Activated T-helper 1 cell treated with anti-CD3 and anti-CD28 coated beads, Interleukin-12 subunit alpha, Interleukin-12 subunit beta, Interleukin-2, Interleukin-4 antibody, amounts not matched to agents 30 ng/mL and 10 ng/mL and 1 ng/mL, durations not matched to agents 14 hours and 24 hours and 36 hours (primary cell): ENCODE measurements at regions of chr12 and their contacts with region 1.

Region 1: GRCh38 chr12:120580787-120581723 is at the start of gene POP5:
- DNase-seq: peak; percentile 95
- H3K4me3 Mint-ChIP-seq: peak within 1 kb of the TSS; percentile 98
- H3K27ac Mint-ChIP-seq: peak within 1 kb of the TSS; percentile 89
- H3K4me1 Mint-ChIP-seq: peaks cover 36% of the 10 kb centered on the region
- H3K27me3 Mint-ChIP-seq: peaks cover 18% of the 10 kb centered on the region
- total RNA-seq, gene POP5: 83.3 and 85.0 TPM in 2 replicates

Region 2: DNA sequence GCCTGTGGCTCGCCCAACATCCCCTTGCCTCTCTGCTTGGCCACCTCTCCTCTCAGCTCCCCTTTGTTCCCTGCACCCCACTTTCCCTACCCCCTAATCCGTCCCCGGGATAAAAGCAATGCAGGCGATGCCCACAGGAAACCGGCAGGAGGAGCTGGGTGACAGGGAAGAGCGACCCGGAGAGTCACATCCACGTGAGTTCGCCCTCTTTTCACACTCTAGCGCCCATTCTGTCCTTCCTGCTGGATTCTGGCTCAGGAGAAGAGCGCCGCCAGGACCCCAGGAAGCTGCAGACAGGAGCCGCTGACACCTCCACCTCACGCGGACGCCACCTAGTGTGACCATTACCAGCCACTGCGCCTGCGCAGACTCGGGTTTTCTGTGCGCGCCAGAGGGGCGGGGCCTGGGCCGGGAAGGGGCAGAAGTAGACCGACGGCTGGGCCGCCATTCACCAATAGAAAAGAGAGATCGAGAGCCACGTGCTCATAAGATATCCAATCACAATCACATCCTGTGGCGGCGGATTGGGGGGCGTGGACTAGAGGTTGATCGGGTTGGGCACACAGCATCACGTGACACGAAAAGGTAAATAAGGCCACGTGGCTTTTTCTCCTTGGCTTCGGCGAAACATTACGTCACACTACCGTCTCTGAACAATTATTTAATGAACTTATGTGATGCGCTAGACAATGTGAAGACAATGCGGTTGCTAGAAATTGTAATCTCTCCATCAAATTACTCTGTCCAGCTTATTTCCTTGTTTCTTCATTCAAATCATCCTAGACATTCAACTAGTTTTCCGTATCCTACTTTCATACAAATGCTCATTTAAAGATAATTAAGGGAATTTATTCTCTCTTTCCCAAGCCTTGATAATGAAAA is 263.6 kb before region 1 on chr12:
- intact Hi-C with region 1: loop called (anchors 2 kb)
- DNase-seq: peak; percentile 100
- H3K4me3 Mint-ChIP-seq: peak overlapping the region; percentile 89
- H3K27ac Mint-ChIP-seq: peak overlapping the region; percentile 92
- H3K4me1 Mint-ChIP-seq: peaks cover 16% of the 10 kb centered on the region
- H3K27me3 Mint-ChIP-seq: peaks cover 6% of the 10 kb centered on the region

Region 3: DNA sequence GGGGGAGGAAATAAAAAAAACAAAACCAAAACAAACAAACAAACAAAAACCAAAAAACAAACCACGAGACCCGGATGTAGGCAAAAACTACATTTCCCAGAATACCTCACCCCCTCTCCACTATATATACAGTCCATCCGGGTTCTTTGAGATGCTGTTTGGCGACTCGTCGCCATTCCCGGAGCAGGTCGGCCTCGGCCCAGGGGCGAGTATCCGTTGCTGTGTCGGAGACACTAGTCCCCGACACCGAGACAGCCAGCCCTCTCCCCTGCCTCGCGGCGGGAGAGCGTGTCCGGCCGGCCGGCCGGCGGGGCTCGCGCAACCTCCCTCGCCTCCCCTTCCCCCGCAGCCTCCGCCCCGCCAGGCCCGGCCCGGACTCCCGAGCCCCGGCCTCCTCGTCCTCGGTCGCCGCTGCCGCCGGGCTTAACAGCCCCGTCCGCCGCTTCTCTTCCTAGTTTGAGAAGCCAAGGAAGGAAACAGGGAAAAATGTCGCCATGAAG is 46.8 kb before region 1 on chr12 and contains the start of gene RNF10:
- intact Hi-C with region 1: loop called (anchors 1 kb)
- DNase-seq: peak; percentile 79
- H3K4me3 Mint-ChIP-seq: peak within 1 kb of the TSS; percentile 96
- H3K27ac Mint-ChIP-seq: peak within 1 kb of the TSS; percentile 94
- H3K4me1 Mint-ChIP-seq: peaks cover 53% of the 10 kb centered on the region
- H3K27me3 Mint-ChIP-seq: no peaks in the 10 kb centered on the region
- total RNA-seq, gene RNF10: 170 and 181 TPM in 2 replicates

Region 4: DNA sequence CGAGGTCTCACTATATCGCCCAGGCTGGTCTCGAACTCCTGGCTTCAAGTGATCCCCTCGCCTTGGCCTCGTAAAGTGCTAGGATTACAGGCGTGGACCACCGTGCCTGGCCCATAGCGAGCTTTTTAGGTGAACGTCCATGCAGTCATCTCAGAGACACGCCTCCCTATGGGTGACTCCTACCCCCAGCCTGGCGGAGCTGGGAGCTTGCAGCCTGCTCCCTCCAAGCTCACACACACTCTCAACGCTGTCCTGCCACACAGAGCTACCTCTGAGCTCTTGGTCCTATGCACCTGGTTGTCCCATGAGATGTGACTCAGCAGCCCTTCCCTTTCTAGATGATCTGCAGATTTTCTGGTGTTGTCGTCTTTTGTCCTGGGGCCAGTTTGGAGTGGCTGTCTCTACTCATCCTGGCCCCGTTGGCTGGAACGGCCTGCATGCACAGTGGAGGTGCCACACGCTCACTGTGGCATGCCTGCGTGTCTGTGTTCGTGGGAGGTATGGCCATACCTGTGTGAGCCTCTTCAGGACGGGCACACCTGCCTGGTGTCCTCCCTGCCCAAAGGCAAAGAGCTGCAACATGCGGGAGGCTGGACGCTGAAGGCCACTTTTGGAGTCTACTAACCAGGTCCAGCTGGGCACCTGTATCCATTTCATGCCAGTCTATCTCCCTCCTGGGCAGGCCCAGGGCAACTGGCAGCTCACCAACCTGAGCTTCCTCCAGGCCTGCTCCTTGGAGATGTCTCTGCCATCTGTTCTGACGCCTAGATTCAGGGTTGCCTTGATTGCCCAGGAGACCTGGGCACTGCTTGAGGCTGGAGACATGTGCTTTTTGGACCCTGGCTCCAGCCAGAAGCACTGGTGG is 77.5 kb after region 1 on chr12:
- intact Hi-C with region 1: no loop called
- DNase-seq: no peak
- H3K4me3 Mint-ChIP-seq: no peak overlapping the region
- H3K27ac Mint-ChIP-seq: no peak overlapping the region
- H3K4me1 Mint-ChIP-seq: no peaks in the 10 kb centered on the region
- H3K27me3 Mint-ChIP-seq: peaks cover 6% of the 10 kb centered on the region

Region 5: DNA sequence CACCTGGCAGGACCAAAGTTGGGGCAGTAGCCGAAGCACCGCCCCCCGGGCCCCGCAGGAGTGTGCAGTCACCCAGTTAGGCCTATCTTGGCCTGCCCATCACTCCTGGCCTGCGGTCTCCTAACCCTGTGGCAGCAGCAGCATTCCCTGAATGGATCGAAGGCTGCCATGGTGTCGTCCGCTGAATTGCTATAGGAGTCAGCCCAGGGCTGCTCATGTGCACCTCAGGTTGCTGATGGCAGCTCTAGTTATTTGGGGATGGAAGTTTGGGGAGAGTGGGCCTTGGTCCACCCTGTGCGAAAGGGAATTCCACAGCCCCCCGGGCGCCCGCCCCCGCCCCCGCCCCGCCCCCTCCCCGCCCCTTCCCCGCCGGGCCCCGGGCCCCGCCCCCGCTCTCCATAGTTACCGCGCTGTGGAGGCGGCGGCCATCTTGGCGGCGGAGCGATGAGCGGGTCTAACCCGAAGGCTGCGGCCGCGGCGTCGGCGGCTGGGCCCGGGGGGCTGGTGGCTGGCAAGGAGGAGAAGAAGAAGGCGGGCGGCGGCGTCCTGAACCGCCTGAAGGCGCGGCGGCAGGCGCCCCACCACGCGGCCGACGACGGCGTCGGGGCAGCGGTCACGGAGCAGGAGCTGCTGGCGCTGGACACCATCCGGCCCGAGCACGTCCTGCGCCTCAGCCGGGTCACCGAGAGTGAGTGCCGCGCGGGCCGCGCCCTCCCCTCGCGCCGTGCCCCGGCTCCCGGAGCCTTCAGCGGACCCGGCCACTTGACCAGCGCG is 129.2 kb after region 1 on chr12 and contains the start of gene UNC119B:
- intact Hi-C with region 1: loop called (anchors 1 kb)
- DNase-seq: peak; percentile 71
- H3K4me3 Mint-ChIP-seq: peak within 1 kb of the TSS; percentile 91
- H3K27ac Mint-ChIP-seq: peak within 1 kb of the TSS; percentile 89
- H3K4me1 Mint-ChIP-seq: peaks cover 37% of the 10 kb centered on the region
- H3K27me3 Mint-ChIP-seq: no peaks in the 10 kb centered on the region
- total RNA-seq, gene UNC119B: 24.2 and 24.6 TPM in 2 replicates

Region 6: DNA sequence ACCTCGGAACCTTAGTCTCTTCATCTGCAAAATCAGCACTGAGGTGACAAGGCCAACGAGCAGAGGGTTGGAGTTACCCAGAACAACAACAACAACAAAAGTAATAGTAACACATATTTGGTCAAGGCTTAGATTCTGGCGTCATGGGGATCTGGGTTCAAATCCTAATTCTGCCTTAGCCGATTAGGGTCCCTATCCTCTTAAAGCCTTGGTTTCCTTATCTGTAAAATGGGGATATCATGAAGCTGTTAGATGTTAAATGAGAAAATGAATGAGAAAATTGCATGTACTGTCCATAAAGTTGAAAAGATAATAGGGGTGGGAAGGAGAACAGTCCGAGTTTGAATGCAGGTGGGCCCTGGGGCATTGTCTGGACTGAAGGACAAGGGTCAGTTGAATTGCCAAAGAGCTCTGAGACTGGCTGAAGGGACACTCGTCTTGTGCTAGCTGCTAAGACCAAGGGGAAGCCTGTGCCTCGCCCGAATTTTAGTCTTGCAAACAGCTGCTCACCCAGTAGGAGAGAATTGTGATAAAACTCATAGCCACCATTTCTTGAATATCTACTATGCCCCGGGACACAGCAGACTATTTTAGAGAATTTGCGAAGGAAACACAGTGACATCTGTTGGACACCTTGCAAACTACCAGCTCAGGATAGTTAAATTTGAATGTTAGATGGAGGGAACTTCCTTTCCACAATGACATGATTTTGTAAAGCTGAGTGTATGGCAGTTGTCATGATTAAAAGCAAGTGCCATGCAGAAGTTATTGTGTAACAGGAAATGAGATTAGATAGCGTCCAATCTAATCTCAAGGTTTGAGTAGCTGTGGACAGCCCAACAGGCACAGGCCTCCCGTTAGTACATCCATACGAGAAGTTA is 390.5 kb after region 1 on chr12:
- intact Hi-C with region 1: loop called (anchors 1 kb)
- DNase-seq: peak; percentile 17
- H3K4me3 Mint-ChIP-seq: no peak overlapping the region
- H3K27ac Mint-ChIP-seq: no peak overlapping the region
- H3K4me1 Mint-ChIP-seq: peaks cover 7% of the 10 kb centered on the region
- H3K27me3 Mint-ChIP-seq: peaks cover 8% of the 10 kb centered on the region

Region 7: DNA sequence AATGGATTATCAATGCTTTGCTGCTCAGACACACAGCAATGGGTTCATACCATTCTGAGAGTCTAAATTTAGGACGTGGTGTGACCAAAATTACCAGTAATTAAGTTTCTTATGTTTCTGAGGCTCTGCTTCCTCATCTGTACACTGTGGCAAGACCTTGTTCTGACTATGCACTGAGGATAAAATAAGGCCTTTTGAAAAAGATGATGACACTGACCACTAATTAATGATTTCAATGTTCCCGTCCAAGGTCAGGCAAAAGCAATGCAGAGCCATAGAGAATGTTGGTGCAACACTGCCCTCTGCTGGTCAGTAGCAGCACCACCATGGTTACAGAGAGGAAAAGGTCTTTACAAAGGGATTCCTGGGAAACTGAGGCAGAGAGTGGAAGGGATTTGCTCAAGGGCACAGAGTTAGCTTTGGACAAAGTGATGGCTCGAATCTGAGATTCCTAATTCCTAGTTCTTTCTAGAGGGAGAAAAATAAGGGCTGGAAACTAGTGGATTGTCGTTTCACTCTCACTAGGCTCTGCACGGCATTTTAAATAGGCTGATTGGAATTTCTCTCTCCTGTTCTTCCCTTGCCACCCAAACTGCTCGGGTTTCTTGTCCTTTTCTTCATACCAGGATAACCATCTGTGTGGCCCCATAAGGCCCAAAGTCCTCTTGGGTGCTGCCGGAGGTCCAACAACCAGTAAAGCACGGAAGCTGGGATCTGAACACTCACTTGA is 529.3 kb after region 1 on chr12:
- intact Hi-C with region 1: loop called (anchors 1 kb)
- DNase-seq: peak; percentile 40
- H3K4me3 Mint-ChIP-seq: no peak overlapping the region
- H3K27ac Mint-ChIP-seq: peak overlapping the region; percentile 21
- H3K4me1 Mint-ChIP-seq: peaks cover 8% of the 10 kb centered on the region
- H3K27me3 Mint-ChIP-seq: peaks cover 4% of the 10 kb centered on the region